GM12878 (cell line): ENCODE measurements at regions of chr17 and their contacts with region 1.

Region 1: GRCh38 chr17:9291912-9292560 is 270.7 kb downstream of the NTN1 start:
- DNase-seq: no peak
- ATAC-seq: peak; percentile 78
- H3K4me3 ChIP-seq: no peak overlapping the region
- H3K27ac ChIP-seq: no peak overlapping the region
- H3K4me1 ChIP-seq: peaks cover 18% of the 10 kb centered on the region
- H3K27me3 ChIP-seq: no peaks in the 10 kb centered on the region
- CTCF ChIP-seq: peak; percentile 84 to 87 (median 84)
- EP300 ChIP-seq: no peak
- POLR2A ChIP-seq: no peak
- RAD21 ChIP-seq: peak; percentile 74

Region 2: GRCh38 chr17:8673612-8674011 is 618.4 kb before region 1 on chr17:
- CTCF ChIA-PET with region 1: no interaction called
- POLR2A ChIA-PET with region 1: no interaction called
- RAD21 ChIA-PET with region 1: no interaction called
- SMC1A ChIA-PET with region 1: no interaction called
- in situ Hi-C with region 1: no loop called
- intact Hi-C with region 1: no loop called
- DNase-seq: no peak
- ATAC-seq: no peak
- H3K4me3 ChIP-seq: no peak overlapping the region
- H3K27ac ChIP-seq: no peak overlapping the region
- H3K4me1 ChIP-seq: no peaks in the 10 kb centered on the region
- H3K27me3 ChIP-seq: no peaks in the 10 kb centered on the region
- CTCF ChIP-seq: no peak
- EP300 ChIP-seq: no peak
- POLR2A ChIP-seq: no peak
- RAD21 ChIP-seq: no peak

Region 3: DNA sequence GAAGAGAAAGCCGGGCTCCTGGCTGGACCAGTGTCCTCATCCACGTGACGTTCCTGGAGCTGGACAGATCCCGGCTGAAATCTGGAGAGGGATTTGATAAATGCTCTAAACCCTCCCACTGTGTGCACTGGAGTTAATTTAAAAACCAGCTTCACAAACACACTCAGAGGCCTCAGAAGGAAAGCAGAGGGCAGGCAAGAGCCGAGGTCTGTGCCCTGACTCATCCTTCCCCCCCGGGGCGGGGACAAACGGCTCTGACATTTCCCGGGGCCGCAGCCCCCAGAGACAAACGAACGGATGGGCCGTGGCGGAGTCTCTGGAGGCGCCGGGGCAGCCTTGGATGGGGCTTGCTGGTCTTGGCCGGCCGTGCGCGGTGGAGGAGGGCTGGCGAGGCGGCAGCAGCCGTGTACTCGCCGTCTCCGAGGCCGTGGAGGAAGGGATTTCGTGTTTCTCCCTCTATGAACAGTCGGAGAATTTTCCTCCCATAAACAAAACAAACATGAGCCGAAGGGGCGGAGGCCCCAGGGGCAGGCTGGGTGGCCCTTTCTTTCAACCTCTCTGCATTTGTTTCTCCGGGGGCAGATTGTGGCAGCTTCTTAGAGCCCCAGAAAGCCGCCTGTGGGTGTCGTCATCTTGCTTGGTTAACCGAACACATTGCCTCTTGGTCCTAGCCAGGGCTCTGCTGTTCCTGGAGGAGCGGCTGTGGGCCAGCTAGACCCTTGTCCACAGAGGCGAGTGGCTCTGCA is 176.4 kb before region 1 on chr17:
- CTCF ChIA-PET with region 1: interaction called, 29 read pairs
- POLR2A ChIA-PET with region 1: interaction called, 3 read pairs
- RAD21 ChIA-PET with region 1: interaction called, 21 read pairs
- SMC1A ChIA-PET with region 1: interaction called, 12 read pairs
- in situ Hi-C with region 1: no loop called
- intact Hi-C with region 1: no loop called
- DNase-seq: no peak
- ATAC-seq: peak; percentile 42
- H3K4me3 ChIP-seq: peak overlapping the region; percentile 36; the same call in 1 of the 2 replicates
- H3K27ac ChIP-seq: no peak overlapping the region
- H3K4me1 ChIP-seq: no peaks in the 10 kb centered on the region
- H3K27me3 ChIP-seq: peaks cover 0 to 5% of the 10 kb centered on the region in 2 experiments; a peak in 2 of 4 replicates
- CTCF ChIP-seq: peak in 2 of 3 experiments; percentile 2 to 18; a peak in 2 of 6 replicates
- EP300 ChIP-seq: no peak
- POLR2A ChIP-seq: no peak
- RAD21 ChIP-seq: 0 out of 2 replicates have a peak, but pooled peaks have one; percentile 14

Region 4: DNA sequence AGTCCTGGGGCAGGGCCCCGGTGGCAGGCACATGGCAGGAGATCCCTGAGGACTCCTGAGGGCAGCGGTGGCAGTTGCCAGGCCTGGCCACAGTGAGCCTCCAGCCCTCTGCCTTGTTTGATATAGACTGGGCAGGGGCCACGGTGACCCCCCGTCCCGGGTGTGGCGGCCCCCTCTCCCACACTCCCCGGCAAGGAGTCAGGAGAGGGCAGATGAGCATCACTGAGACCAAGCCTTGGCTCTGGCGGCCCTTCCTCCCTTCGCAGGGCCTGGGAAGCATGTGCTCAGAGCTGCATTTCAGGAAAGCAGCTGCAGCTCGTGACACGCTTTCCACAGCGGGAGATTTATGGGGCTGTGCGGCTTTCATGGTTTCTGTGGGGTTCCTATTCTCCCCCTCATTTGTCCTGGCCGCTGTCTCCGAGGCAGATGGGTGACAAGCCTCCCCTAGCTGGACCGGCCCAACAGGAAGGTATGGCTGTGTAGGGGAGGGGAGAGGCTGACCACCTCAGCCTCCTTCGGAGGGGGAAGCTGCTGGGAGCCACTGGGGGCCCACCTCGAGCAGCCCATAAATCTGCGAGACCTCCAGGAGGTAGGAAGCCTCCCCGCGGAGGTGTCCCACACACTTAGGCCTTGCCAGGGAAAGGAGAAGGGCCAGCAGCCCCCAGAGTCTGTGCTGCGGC is 59.3 kb before region 1 on chr17:
- CTCF ChIA-PET with region 1: no interaction called
- POLR2A ChIA-PET with region 1: no interaction called
- RAD21 ChIA-PET with region 1: no interaction called
- SMC1A ChIA-PET with region 1: no interaction called
- in situ Hi-C with region 1: no loop called
- intact Hi-C with region 1: no loop called
- DNase-seq: no peak
- ATAC-seq: peak; percentile 18; the same call in 1 of the 3 replicates
- H3K4me3 ChIP-seq: no peak overlapping the region
- H3K27ac ChIP-seq: no peak overlapping the region
- H3K4me1 ChIP-seq: no peaks in the 10 kb centered on the region
- H3K27me3 ChIP-seq: peaks cover 0 to 6% of the 10 kb centered on the region in 2 experiments; a peak in 1 of 4 replicates
- CTCF ChIP-seq: no peak
- EP300 ChIP-seq: no peak
- POLR2A ChIP-seq: no peak
- RAD21 ChIP-seq: no peak

Region 5: GRCh38 chr17:9271989-9272388 is 20.0 kb before region 1 on chr17:
- CTCF ChIA-PET with region 1: interaction called, 10 read pairs
- POLR2A ChIA-PET with region 1: no interaction called
- RAD21 ChIA-PET with region 1: interaction called, 4 read pairs
- SMC1A ChIA-PET with region 1: interaction called, 4 read pairs
- in situ Hi-C with region 1: no loop called
- intact Hi-C with region 1: no loop called
- DNase-seq: no peak
- ATAC-seq: no peak
- H3K4me3 ChIP-seq: no peak overlapping the region
- H3K27ac ChIP-seq: no peak overlapping the region
- H3K4me1 ChIP-seq: no peaks in the 10 kb centered on the region
- H3K27me3 ChIP-seq: no peaks in the 10 kb centered on the region
- CTCF ChIP-seq: no peak
- EP300 ChIP-seq: no peak
- POLR2A ChIP-seq: no peak
- RAD21 ChIP-seq: no peak

Region 6: GRCh38 chr17:9522074-9522473 is 230.0 kb after region 1 on chr17:
- CTCF ChIA-PET with region 1: interaction called, 13 read pairs
- POLR2A ChIA-PET with region 1: no interaction called
- RAD21 ChIA-PET with region 1: interaction called, 4 read pairs
- SMC1A ChIA-PET with region 1: interaction called, 4 read pairs
- in situ Hi-C with region 1: no loop called
- intact Hi-C with region 1: loop called (anchors 5 kb)
- DNase-seq: no peak
- ATAC-seq: peak; percentile 74
- H3K4me3 ChIP-seq: no peak overlapping the region
- H3K27ac ChIP-seq: no peak overlapping the region
- H3K4me1 ChIP-seq: no peaks in the 10 kb centered on the region
- H3K27me3 ChIP-seq: no peaks in the 10 kb centered on the region
- CTCF ChIP-seq: peak; percentile 45 to 60 (median 53); a peak in 5 of 6 replicates
- EP300 ChIP-seq: no peak
- POLR2A ChIP-seq: no peak
- RAD21 ChIP-seq: peak; percentile 83